Panc1 (cell line): ENCODE measurements at regions of chr3 and their contacts with region 1.

Region 1: DNA sequence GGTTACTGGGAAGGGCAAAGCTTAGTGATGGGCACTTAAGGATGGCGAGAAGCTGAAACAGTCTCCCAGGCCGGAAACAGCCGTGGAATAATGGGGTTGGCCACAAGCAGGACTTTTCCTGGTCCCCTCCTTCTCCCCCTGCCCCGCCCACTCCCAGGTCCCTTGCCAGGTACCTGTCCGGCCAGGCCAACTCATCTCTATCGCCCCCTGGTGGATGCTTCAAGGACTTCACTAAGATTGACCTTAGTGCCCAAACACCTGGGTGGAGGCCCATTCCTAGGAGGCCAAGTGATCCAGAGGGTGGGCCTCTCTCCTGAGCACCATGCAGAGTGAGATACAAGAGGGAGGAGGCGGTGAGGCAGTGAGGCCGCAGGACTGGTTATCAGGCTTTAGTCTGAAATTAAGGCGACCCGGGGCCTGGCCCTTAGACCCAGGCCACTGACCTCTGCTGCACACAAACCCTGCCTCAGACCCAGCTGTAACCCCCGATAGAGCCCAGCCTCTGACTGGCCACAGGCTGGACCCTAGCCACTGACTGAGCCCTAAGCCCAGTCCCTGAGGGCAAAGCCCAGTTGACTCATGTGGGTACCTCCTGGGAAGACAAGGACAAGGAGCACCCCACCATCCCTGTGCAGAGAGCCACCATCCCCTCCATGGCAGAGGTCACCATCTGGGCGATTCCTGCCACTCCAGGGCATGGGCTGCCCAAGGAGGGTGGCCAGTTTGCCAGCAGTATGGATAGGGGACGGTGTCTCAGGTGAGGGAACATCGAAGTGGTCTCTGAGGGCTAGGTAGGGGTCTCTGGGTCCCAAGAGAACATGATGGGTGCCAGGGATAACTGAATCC is 37.6 kb downstream of the VIPR1 start:
- DNase-seq: no peak
- ATAC-seq: peak; percentile 61; the same call in 1 of the 2 replicates
- H3K4me3 ChIP-seq: no peak overlapping the region
- H3K27ac ChIP-seq: no peak overlapping the region
- H3K4me1 ChIP-seq: no peaks in the 10 kb centered on the region
- H3K27me3 ChIP-seq: no peaks in the 10 kb centered on the region
- CTCF ChIP-seq: peak; percentile 83

Region 2: GRCh38 chr3:41933146-41933676 is 606.9 kb before region 1 on chr3:
- CTCF ChIA-PET with region 1: no interaction called
- POLR2A ChIA-PET with region 1: no interaction called
- in situ Hi-C with region 1: no loop called
- intact Hi-C with region 1: no loop called
- DNase-seq: no peak
- ATAC-seq: peak; percentile 84
- H3K4me3 ChIP-seq: no peak overlapping the region
- H3K27ac ChIP-seq: peak overlapping the region; percentile 76
- H3K4me1 ChIP-seq: peaks cover 10% of the 10 kb centered on the region
- H3K27me3 ChIP-seq: no peaks in the 10 kb centered on the region
- CTCF ChIP-seq: no peak

Region 3: GRCh38 chr3:42502429-42503250 is 37.5 kb before region 1 on chr3 and contains the start of gene VIPR1:
- CTCF ChIA-PET with region 1: interaction called, 4 read pairs
- POLR2A ChIA-PET with region 1: no interaction called
- in situ Hi-C with region 1: no loop called
- intact Hi-C with region 1: loop called (anchors 2 kb)
- DNase-seq: no peak
- ATAC-seq: peak; percentile 86
- H3K4me3 ChIP-seq: peak within 1 kb of the TSS; percentile 31 to 53
- H3K27ac ChIP-seq: no peak within 1 kb of the TSS
- H3K4me1 ChIP-seq: no peaks in the 10 kb centered on the region
- H3K27me3 ChIP-seq: no peaks in the 10 kb centered on the region; the same call in 1 of the 2 replicates
- CTCF ChIP-seq: no peak
- total RNA-seq, gene VIPR1: 0.41 TPM